Head of caudate nucleus (tissue), 42 donors: ENCODE measurements at regions of chr15 and their contacts with region 1.

Region 1: GRCh38 chr15:84748274-84749110 is at the start of gene ZNF592:
- DNase-seq: peak in 41 of 42 donors; percentile 8 to 92 (median 80)

Region 2: DNA sequence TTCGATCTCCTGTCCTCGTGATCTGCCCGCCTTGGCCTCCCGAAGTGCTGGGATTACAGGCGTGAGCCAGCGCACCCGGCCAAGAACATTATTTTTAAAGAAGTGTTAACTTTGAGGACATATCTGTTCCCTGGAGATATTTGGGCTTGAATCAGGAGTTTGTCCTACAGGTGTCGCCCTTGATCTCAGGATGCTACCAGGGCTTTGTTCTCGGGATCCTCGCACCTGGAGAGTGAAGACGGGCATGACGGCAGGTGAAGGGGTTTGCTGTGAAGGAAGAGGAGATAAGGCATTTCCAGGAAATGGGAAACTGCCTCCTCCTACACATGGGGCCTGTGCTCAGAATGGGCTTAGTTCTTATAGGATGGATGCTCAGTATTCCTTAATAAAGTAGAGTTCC is 125.2 kb before region 1 on chr15:
- intact Hi-C with region 1: no loop called
- DNase-seq: no peak

Region 3: GRCh38 chr15:84633311-84634227 is 114.9 kb before region 1 on chr15:
- intact Hi-C with region 1: loop called (anchors 5 kb)
- DNase-seq: peak; percentile 24 to 87 (median 70)

Region 4: GRCh38 chr15:84658080-84658787 is 90.3 kb before region 1 on chr15 and contains the start of gene NMB:
- intact Hi-C with region 1: loop called (anchors 5 kb)
- DNase-seq: peak in 41 of 42 donors; percentile 20 to 86 (median 70)

Region 5: GRCh38 chr15:84716036-84716799 is 32.3 kb before region 1 on chr15 and contains the start of gene SEC11A:
- intact Hi-C with region 1: loop called (anchors 5 kb)
- DNase-seq: peak; percentile 91 to 99 (median 96)

Region 6: GRCh38 chr15:84818261-84819131 is 70.0 kb after region 1 on chr15:
- intact Hi-C with region 1: no loop called
- DNase-seq: no peak

Region 7: DNA sequence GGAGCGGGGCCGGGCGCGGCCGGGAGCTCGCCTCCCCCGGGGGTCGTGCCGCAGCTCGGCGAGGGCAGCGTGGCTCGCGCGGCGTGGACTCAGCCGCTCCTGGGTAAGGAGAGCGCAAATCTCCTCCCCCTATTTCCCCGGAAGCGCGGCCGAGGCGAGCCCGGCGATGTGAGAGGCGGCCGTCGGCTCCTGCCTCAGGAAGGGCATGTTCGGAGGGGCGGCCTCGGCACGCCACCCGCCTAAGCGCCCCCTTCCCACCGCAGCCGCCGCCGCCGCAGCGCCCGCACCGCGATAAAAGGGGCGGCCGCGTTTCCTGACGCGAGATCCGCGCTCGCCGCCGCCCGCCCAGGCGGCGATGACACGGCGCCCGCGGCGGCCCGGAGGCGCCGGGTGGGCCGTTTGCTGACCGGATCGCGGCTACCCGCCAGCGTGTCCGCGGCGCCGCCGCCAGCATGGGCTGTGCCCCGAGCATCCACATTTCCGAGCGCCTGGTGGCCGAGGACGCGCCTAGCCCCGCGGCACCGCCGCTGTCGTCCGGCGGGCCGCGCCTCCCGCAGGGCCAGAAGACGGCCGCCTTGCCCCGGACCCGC is 233.3 kb after region 1 on chr15 and contains the start of gene PDE8A:
- intact Hi-C with region 1: no loop called
- DNase-seq: peak in 21 of 42 donors; percentile 4 to 64 (median 28)

Region 8: DNA sequence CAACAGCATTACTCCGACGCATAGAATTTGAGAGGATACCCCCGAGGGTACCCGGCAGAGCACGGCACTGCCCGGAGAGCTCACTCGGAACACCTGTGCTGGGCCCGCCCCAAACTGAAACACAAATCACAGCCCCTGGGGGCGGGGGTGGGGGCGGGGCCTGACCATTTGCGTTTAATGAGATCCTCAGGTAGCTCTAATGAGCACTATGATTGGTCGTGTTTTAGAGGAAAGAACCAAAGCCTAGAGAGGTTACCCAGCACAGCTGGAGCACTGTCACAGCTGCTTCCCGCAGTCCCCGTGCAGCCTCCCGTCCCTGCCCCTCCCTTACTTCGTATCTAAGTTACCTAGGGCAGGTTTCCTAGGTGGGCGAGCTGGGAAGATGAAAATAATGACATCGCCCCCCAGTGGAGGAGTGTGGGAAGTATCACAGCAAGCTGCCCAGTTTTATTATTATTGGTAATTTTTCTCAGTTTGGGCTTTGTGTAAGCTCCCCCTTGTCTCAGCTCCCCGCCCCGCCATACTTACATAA is 420.2 kb after region 1 on chr15:
- intact Hi-C with region 1: no loop called
- DNase-seq: peak in 26 of 42 donors; percentile 7 to 53 (median 27)